ENCODE measurements at regions of chr4 and their contacts with region 1.

Region 1: DNA sequence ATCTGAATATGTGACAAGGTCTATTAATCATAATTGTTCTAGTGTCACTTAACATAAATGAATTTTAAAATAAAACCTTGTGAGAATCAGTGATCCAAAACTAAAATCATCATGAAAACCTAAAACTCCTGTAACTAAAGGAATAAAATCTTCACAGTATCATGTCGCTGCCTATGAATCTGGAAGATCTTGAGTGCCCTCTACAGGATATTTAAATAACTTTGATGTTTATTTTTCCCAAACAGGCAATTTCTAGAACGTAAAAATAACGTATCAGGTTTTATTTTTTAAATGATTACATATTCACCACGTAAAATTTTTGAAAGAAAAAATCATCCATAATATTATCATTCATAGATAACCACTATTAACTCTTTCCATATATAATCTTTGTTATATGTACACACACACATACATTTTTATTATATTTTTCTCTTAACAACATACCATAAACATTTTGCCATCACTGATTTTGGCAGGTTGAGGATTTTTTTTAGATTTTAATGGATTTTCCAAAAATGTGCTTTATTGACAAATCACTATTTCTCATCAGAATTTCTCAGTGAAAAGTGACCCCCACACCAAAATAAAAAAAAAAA is 79.6 kb downstream of the COMMD8 start:
- DNase-seq: no peak
- H3K4me3 ChIP-seq: no peak overlapping the region
- H3K27ac ChIP-seq: no peak overlapping the region
- H3K4me1 ChIP-seq: no peaks in the 10 kb centered on the region
- H3K27me3 ChIP-seq: no peaks in the 10 kb centered on the region
- CTCF ChIP-seq: peak in 1 of 3 experiments; percentile 39
- POLR2A ChIP-seq: no peak

Region 2: GRCh38 chr4:47145630-47146029 is 238.3 kb before region 1 on chr4:
- intact Hi-C with region 1: no loop called
- DNase-seq: no peak
- H3K4me3 ChIP-seq: no peak overlapping the region
- H3K27ac ChIP-seq: no peak overlapping the region
- H3K4me1 ChIP-seq: no peaks in the 10 kb centered on the region
- H3K27me3 ChIP-seq: no peaks in the 10 kb centered on the region
- CTCF ChIP-seq: no peak
- POLR2A ChIP-seq: no peak

Region 3: DNA sequence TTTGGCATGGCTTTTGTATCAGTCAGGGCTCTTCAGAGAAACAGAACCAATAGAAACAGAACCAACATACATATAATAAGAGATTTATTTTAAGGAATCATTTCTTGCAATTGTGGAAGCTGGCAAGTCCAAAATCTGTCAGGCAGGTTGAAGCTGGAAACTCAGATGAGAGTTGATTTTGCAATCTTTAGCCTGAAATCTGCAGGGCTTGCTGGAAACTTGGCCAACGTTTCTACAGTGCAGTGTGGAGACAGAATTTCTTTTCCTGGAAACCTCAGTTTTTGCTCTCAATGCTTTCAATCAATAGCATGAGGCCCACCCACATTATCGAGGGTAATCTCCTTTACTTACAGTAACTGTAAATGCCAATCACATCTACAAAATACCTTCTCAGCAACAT is 34.2 kb after region 1 on chr4:
- intact Hi-C with region 1: loop called (anchors 1 kb)
- DNase-seq: no peak
- H3K4me3 ChIP-seq: no peak overlapping the region
- H3K27ac ChIP-seq: no peak overlapping the region
- H3K4me1 ChIP-seq: no peaks in the 10 kb centered on the region
- H3K27me3 ChIP-seq: no peaks in the 10 kb centered on the region
- CTCF ChIP-seq: no peak
- POLR2A ChIP-seq: no peak